Breast epithelium (tissue), 4 donors: ENCODE measurements at regions of chr6 and their contacts with region 1.

Region 1: DNA sequence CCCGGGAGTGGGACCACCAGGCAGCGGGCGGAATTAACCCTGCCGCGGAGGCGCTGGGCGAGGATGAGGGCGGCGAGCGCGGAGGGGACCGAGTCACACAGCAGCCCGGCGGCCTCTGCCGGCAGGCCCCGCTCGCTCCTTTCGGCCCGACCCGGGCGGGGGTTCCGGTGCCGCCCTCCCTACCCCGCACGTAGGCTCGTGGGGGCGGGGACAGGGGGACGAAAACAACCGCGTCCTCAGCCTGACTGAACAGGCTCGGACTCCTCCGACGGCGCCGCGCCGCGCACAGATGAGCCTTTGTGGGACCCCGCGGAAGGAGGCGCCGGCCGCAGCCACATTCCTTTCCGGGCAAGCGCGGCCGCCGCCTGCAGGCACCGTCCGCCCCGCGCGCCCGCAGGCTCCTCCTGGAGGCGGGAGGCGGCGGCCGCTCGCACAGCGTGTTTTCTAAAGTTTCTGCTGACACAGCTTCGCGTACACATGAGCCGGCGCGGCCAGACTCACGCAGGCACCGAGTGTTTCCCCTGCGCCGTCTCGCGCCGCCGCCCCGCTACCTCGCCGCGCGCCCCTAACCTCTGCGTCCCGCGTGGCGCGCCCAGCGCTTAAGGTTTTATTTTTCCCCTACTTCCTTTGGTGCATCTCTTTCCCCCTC is 244.3 kb downstream of the ARID1B start:
- DNase-seq: peak; percentile 89 to 95
- H3K4me3 ChIP-seq: peak overlapping the region; percentile 83 to 94 (median 83)
- H3K27ac ChIP-seq: peak overlapping the region; percentile 99
- H3K4me1 ChIP-seq: peaks cover 0 to 8% of the 10 kb centered on the region in 2 donors
- H3K27me3 ChIP-seq: no peaks in the 10 kb centered on the region
- CTCF ChIP-seq: peak in 2 of 3 donors; percentile 31 to 50
- POLR2A ChIP-seq: peak; percentile 87

Region 2: DNA sequence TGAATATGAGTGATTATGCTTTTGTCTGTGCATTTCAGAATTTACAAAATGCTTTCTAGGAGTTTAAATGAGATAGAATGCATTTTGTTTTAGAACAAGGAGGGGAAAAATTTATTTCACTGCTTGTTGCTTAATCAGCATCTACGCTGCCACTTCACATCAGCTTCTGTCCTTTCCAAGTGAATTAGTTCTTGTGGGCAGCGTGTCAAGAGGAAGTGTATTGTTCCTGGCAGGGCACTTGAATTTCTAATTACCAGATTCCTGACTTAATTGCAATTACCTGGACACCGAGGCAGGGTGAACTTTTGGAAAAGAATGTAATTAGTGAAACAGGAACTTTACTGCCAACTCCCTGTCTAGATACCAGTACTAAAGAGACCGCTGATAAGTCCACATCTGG is 38.3 kb after region 1 on chr6:
- intact Hi-C with region 1: no loop called
- DNase-seq: peak in 1 of 2 donors; percentile 56
- H3K4me3 ChIP-seq: no peak overlapping the region
- H3K27ac ChIP-seq: peak overlapping the region; percentile 4 to 34
- H3K4me1 ChIP-seq: peaks cover 0 to 3% of the 10 kb centered on the region in 2 donors
- H3K27me3 ChIP-seq: no peaks in the 10 kb centered on the region
- CTCF ChIP-seq: no peak
- POLR2A ChIP-seq: no peak

Region 3: DNA sequence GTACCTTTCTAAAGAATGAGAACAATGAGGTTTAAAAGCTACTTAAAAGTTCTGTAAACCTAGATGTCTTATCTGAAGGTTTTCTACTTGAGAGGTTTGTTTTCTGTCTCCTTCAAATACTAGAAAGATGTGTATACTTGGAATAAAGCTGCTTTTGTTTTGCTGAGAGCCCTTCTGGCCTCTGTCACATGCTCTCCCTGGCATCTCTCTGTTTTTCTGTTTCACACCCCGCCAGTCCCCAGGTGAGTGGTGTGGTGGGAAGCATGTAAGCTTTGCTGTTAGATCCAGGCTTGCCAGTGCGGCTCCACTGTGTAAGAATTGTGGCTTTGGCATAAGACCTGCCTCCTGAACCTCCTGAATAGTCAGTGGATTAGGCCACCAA is 858.4 kb after region 1 on chr6:
- intact Hi-C with region 1: loop called (anchors 5 kb)
- DNase-seq: peak in 1 of 2 donors; percentile 53
- H3K4me3 ChIP-seq: no peak overlapping the region
- H3K27ac ChIP-seq: peak overlapping the region in 1 of 2 donors; percentile 66
- H3K4me1 ChIP-seq: peaks cover 0 to 5% of the 10 kb centered on the region in 2 donors
- H3K27me3 ChIP-seq: no peaks in the 10 kb centered on the region
- CTCF ChIP-seq: no peak
- POLR2A ChIP-seq: no peak